Head of caudate nucleus (tissue), 42 donors: ENCODE measurements at regions of chr2 and their contacts with region 1.

Region 1: GRCh38 chr2:161228511-161229240 is 68.4 kb downstream of the TANK start:
- DNase-seq: no peak

Region 2: GRCh38 chr2:161273038-161273760 is 44.5 kb after region 1 on chr2:
- intact Hi-C with region 1: loop called (anchors 5 kb)
- DNase-seq: peak in 11 of 42 donors; percentile 16 to 77 (median 49)